Panc1 (cell line): ENCODE measurements at regions of chr7 and their contacts with region 1.

Region 1: DNA sequence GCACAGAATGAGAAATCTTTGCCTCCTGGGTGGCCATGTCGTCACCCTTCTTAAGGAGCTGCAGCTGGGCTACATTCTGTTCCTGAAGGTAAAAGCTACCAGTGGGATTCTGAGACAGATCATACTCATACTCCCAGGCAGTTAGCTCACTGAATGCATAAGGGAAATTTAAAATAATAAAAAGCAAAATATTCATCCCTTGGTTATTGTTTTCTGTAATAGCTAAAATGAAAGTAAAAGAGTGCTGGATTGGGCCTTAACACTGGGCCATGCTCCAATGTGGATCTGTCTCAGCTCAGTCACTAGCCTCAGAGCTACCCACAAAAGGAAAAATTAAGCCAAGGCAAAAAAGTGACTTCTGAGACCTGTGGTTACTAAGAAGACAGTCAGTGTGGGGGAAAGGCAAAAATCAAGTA is 8.9 kb upstream of the DYNC2I1 start:
- DNase-seq: no peak
- ATAC-seq: no peak
- H3K4me3 ChIP-seq: no peak overlapping the region
- H3K27ac ChIP-seq: no peak overlapping the region
- H3K4me1 ChIP-seq: 0 out of 2 replicates have a peak, but pooled peaks cover 5% of the 10 kb centered on the region
- H3K27me3 ChIP-seq: no peaks in the 10 kb centered on the region
- CTCF ChIP-seq: no peak

Region 2: DNA sequence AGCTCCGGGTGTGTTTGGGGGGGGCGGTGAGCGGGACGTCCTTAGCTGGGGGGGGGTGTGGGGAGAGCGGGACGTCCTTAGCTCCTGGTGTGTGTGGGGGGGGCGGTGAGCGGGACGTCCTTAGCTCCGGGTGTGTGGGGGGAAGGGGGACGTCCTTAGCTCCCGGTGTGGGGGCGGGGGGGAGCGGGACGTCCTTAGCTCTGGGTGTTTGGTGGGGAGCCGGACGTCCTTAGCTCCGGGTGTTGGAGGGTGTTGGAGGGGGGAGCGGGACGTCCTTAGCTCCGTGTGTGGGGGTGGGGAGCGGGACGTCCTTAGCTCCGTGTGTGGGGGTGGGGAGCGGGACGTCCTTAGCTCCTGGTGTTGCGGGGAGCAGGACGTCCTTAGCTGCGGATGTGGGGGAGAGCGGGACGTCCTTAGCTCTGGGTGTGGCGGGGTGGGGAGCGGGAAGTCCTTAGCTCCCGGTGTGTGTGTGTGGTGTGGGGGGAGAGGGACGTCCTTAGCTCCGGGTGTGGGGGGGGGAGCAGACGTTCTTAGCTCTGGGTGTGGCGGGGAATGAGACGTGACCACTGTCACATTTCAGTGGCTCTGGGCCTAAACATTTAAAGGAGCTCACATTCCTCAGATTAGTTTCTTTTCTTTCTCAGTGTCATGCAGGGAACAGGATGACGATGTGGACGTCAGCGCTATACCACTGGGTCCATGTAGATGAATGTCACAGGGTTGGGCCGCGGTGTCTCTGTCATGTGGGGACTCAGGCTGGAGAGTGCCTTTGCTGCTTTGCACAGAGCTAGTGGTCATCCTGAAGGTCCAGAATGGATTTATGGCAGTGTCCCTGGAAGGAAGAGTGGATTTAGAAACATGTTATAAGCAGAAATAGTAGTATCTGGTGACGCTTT is 16.4 kb after region 1 on chr7:
- CTCF ChIA-PET with region 1: no interaction called
- POLR2A ChIA-PET with region 1: interaction called, 15 read pairs
- in situ Hi-C with region 1: no loop called
- intact Hi-C with region 1: no loop called
- DNase-seq: no peak
- ATAC-seq: peak; percentile 83
- H3K4me3 ChIP-seq: peak overlapping the region; percentile 44 to 64
- H3K27ac ChIP-seq: peak overlapping the region; percentile 88
- H3K4me1 ChIP-seq: peaks cover 39% of the 10 kb centered on the region
- H3K27me3 ChIP-seq: no peaks in the 10 kb centered on the region
- CTCF ChIP-seq: no peak

Region 3: GRCh38 chr7:159227433-159227832 is 380.0 kb after region 1 on chr7:
- CTCF ChIA-PET with region 1: no interaction called
- POLR2A ChIA-PET with region 1: no interaction called
- in situ Hi-C with region 1: no loop called
- intact Hi-C with region 1: no loop called
- DNase-seq: no peak
- ATAC-seq: no peak
- H3K4me3 ChIP-seq: no peak overlapping the region
- H3K27ac ChIP-seq: no peak overlapping the region
- H3K4me1 ChIP-seq: no peaks in the 10 kb centered on the region
- H3K27me3 ChIP-seq: peaks cover 6% of the 10 kb centered on the region
- CTCF ChIP-seq: no peak